H1 (cell line): ENCODE measurements at regions of chr7 and their contacts with region 1.

Region 1: GRCh38 chr7:150368096-150368883 is at the start of gene REPIN1:
- DNase-seq: peak in 1 of 2 experiments; percentile 92
- H3K4me3 ChIP-seq: peak within 1 kb of the TSS; percentile 63 to 78 (median 69)
- H3K27ac ChIP-seq: peak within 1 kb of the TSS; percentile 95
- H3K4me1 ChIP-seq: peaks cover 2 to 26% (median 12%) of the 10 kb centered on the region in 4 experiments
- H3K27me3 ChIP-seq: no peaks in the 10 kb centered on the region
- CTCF ChIP-seq: no peak
- EP300 ChIP-seq: peak in 1 of 2 experiments; percentile 17; a peak in 1 of 3 replicates
- POLR2A ChIP-seq: peak in 1 of 2 experiments; percentile 41; a peak in 2 of 3 replicates
- RAD21 ChIP-seq: no peak; a peak in 1 of 4 replicates
- total RNA-seq, gene REPIN1: 125 and 130 TPM in 2 replicates

Region 2: DNA sequence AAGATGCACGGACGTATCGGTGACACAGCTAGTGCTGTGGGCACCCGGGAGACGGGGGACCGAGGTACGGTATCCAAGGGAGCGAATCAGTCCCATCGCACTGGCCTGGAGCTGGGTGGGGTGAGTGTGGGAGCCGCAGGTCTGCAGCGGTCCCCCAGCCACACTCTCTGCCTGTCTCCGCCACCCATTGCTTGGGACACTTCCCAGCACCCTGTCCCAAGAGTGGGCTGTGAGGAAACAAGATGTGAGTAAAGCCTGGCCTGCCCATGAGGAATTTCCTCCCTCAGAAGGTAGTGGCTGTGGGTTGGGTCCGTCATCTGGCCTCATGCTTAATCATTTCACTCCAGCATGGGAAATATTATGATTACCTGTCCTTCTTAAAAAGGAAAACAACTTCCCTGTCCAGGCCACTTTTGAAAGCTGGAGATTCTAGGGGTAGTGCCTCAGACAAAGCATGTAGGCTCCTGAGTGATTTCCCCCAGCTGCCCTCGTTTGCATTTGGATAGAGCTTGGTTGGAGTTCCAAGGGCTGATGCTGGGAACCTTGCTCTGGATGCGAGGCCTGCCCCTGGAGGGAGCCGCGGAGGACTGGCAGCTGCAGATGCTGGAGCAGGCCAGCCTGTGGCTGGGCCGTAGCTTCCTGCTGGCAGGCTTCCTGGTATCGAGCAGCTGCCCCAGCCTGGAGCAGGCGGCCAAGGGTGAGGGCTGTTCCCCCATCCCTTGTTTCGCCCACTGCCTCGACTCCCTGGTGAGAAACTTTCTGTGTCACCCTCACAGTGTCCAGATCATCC is 38.8 kb before region 1 on chr7:
- CTCF ChIA-PET with region 1: interaction called, 3 read pairs
- POLR2A ChIA-PET with region 1: interaction called, 76 read pairs
- DNase-seq: peak in 1 of 2 experiments; percentile 66
- H3K4me3 ChIP-seq: no peak overlapping the region; a peak in 2 of 8 replicates
- H3K27ac ChIP-seq: peak overlapping the region; percentile 43; the same call in 1 of the 2 replicates
- H3K4me1 ChIP-seq: peaks cover 10 to 31% (median 23%) of the 10 kb centered on the region in 4 experiments
- H3K27me3 ChIP-seq: 0 out of 7 replicates have a peak, but pooled peaks cover 0 to 2% (median 0%) of the 10 kb centered on the region in 4 experiments
- CTCF ChIP-seq: peak in 2 of 3 experiments; percentile 5 to 18; a peak in 1 of 4 replicates
- EP300 ChIP-seq: no peak; a peak in 1 of 3 replicates
- POLR2A ChIP-seq: peak in 1 of 2 experiments; percentile 36; a peak in 1 of 3 replicates
- RAD21 ChIP-seq: peak; percentile 13 to 38; a peak in 2 of 4 replicates

Region 3: GRCh38 chr7:150356265-150356897 is 11.9 kb before region 1 on chr7:
- CTCF ChIA-PET with region 1: interaction called, 32 read pairs
- POLR2A ChIA-PET with region 1: interaction called, 43 read pairs
- DNase-seq: no peak
- H3K4me3 ChIP-seq: no peak overlapping the region
- H3K27ac ChIP-seq: no peak overlapping the region
- H3K4me1 ChIP-seq: peaks cover 3 to 6% (median 5%) of the 10 kb centered on the region in 4 experiments; a peak in 5 of 7 replicates
- H3K27me3 ChIP-seq: no peaks in the 10 kb centered on the region; a peak in 1 of 7 replicates
- CTCF ChIP-seq: peak in 2 of 3 experiments; percentile 60 to 61; a peak in 3 of 4 replicates
- EP300 ChIP-seq: no peak
- POLR2A ChIP-seq: no peak
- RAD21 ChIP-seq: peak; percentile 60 to 70

Region 4: GRCh38 chr7:150388709-150389531 is 20.6 kb after region 1 on chr7:
- CTCF ChIA-PET with region 1: interaction called, 9 read pairs
- POLR2A ChIA-PET with region 1: interaction called, 116 read pairs
- DNase-seq: no peak
- H3K4me3 ChIP-seq: no peak overlapping the region
- H3K27ac ChIP-seq: no peak overlapping the region
- H3K4me1 ChIP-seq: peaks cover 19 to 29% (median 24%) of the 10 kb centered on the region in 4 experiments
- H3K27me3 ChIP-seq: no peaks in the 10 kb centered on the region
- CTCF ChIP-seq: peak; percentile 64 to 69 (median 68)
- EP300 ChIP-seq: no peak
- POLR2A ChIP-seq: no peak
- RAD21 ChIP-seq: peak; percentile 75 to 80

Region 5: GRCh38 chr7:150404805-150405583 is 36.7 kb after region 1 on chr7:
- CTCF ChIA-PET with region 1: interaction called, 4 read pairs
- POLR2A ChIA-PET with region 1: interaction called, 230 read pairs
- DNase-seq: peak in 1 of 2 experiments; percentile 88
- H3K4me3 ChIP-seq: peak overlapping the region; percentile 49 to 79 (median 61)
- H3K27ac ChIP-seq: peak overlapping the region; percentile 97
- H3K4me1 ChIP-seq: peaks cover 36 to 58% (median 45%) of the 10 kb centered on the region in 4 experiments
- H3K27me3 ChIP-seq: no peaks in the 10 kb centered on the region
- CTCF ChIP-seq: peak; percentile 1 to 20 (median 5); a peak in 2 of 4 replicates
- EP300 ChIP-seq: peak; percentile 1 to 79; a peak in 2 of 3 replicates
- POLR2A ChIP-seq: peak in 1 of 2 experiments; percentile 31
- RAD21 ChIP-seq: peak in 1 of 2 experiments; percentile 9; a peak in 2 of 4 replicates

Region 6: GRCh38 chr7:150481186-150481920 is 113.1 kb after region 1 on chr7:
- CTCF ChIA-PET with region 1: no interaction called
- POLR2A ChIA-PET with region 1: no interaction called
- DNase-seq: no peak
- H3K4me3 ChIP-seq: no peak overlapping the region
- H3K27ac ChIP-seq: no peak overlapping the region
- H3K4me1 ChIP-seq: peaks cover 0 to 3% (median 0%) of the 10 kb centered on the region in 4 experiments; a peak in 1 of 7 replicates
- H3K27me3 ChIP-seq: no peaks in the 10 kb centered on the region
- CTCF ChIP-seq: no peak
- EP300 ChIP-seq: no peak
- POLR2A ChIP-seq: no peak
- RAD21 ChIP-seq: no peak